ENCODE measurements at regions of chr18 and their contacts with region 1.

Region 1: GRCh38 chr18:43587538-43588153 is 310.4 kb upstream of the SYT4 start:
- DNase-seq: no peak
- H3K4me3 Mint-ChIP-seq: no peak overlapping the region
- H3K27ac Mint-ChIP-seq: no peak overlapping the region
- H3K4me1 Mint-ChIP-seq: no peaks in the 10 kb centered on the region
- H3K27me3 Mint-ChIP-seq: no peaks in the 10 kb centered on the region

Region 2: DNA sequence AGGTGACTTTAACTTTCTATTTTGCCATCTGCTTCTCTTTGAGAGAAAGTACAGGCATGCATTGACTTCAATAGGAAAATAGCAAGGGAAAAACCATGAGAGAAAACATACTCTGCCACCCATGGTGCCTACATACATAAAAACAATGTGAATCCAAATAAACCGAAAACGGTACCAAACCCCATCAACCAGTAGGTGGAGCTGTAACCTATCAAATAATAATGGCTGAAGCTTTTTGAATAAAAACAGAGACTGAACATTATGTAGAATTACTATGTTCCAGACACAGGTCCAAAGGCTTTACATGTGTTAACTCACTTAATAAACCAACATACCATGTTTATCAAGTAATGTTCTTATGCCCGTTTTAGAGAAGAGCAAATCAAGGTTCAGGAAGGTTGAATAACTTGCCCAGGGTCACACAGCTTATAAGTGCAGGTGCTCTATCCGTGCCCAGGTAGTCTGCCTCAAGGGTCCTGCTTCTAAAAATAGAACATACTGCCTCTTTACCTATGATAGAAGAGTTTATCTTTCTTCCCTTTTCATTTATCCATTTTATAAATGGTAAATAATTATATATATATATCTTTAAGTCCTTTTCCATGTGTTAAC is 16.5 kb before region 1 on chr18:
- CTCF ChIA-PET with region 1: interaction called, 34 read pairs
- DNase-seq: no peak
- H3K4me3 Mint-ChIP-seq: no peak overlapping the region
- H3K27ac Mint-ChIP-seq: no peak overlapping the region
- H3K4me1 Mint-ChIP-seq: no peaks in the 10 kb centered on the region
- H3K27me3 Mint-ChIP-seq: no peaks in the 10 kb centered on the region

Measured in activated naive CD4-positive, alpha-beta T cell treated with anti-CD3 and anti-CD28 coated beads, Interleukin-2, amount 10 ng/mL, durations not matched to agents 7 days and 5 days (primary cell).